Thyroid gland (tissue), 4 donors: ENCODE measurements at regions of chr17 and their contacts with region 1.

Region 1: DNA sequence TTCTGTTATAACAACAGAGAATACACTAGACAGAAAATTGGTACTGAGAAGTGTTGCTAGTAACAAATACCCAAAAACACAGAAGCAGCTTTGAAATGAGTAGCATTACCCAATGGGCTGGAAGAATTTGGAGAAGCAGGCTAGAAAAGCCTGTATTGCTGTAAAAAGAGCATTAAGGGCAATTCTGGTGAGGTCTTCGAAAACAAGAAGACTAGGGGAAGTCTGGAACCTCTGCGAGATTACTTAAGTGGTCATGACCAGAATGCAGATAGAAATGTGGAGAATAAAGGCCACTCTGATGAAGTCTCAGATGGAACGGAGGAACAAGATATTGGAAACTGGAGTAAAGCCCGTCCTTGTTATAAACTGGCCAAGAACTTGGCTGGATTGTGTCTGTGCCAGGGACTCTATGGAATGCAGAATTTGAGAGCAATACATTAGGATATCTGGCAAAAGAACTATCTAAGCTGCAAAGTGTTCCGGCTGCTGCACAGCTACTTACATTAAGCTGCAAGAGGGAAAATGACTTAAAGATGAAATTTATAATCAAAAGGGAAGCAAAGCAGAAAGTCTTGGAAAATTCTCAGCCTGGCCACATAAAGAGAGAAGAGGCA is 44.9 kb upstream of the PEMT start:
- DNase-seq: no peak
- H3K4me3 ChIP-seq: no peak overlapping the region
- H3K27ac ChIP-seq: no peak overlapping the region
- H3K4me1 ChIP-seq: peaks cover 0 to under 1% of the 10 kb centered on the region in 2 donors
- H3K27me3 ChIP-seq: no peaks in the 10 kb centered on the region
- CTCF ChIP-seq: no peak
- POLR2A ChIP-seq: no peak

Region 2: DNA sequence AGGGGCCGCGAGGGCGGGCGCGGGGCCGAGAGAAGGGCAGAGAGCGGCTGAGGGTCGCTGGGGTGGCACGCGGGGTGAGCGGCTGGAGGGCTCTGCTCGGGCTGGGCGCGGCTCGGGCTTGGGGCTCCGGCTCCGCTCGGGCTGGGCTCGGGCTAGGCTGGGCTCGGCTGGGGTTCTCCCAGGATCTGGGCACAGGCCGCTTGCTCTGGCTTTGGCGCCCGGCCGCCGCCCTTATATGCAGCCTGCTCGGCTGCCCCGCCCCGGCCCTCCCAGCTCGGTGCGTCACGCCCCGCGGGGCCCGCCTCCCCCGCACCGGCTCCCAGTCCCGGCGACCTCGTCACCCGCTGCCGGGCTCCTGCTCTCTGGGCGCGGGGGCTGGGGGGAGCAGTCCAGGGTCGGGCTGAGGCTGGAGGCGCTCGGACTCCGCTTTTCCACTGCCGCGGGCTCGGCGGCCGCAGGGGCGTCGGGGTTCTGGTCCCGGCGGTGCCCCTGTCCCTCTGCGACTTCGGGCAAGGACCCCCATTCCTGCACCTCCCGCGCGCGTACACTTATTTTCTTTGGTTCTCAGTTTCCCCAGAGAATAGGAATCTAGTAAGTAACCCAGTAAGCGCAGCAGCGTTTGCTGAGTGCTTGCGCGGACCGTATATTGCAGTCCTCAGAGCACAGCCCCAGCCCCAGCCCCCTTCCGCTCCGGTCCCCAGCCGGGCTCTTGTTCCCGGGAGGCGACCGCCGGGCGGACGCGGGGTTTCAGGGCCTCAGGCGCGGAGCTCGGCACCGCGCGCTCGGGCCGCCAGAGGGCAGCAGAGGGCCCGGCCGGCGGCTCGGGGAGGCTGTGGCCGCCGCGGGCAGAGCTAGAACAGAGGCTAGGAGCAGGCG is 140.0 kb before region 1 on chr17 and contains the start of gene RASD1:
- intact Hi-C with region 1: loop called (anchors 5 kb)
- DNase-seq: peak; percentile 91
- H3K4me3 ChIP-seq: peak within 1 kb of the TSS; percentile 9 to 80 (median 76)
- H3K27ac ChIP-seq: peak within 1 kb of the TSS; percentile 85 to 96 (median 94)
- H3K4me1 ChIP-seq: peaks cover 7 to 18% of the 10 kb centered on the region in 2 donors
- H3K27me3 ChIP-seq: no peaks in the 10 kb centered on the region
- CTCF ChIP-seq: peak; percentile 31 to 99 (median 94)
- POLR2A ChIP-seq: peak; percentile 99 to 100
- total RNA-seq, gene RASD1: 114 to 149 (median 141) TPM

Region 3: GRCh38 chr17:17739388-17740066 is 103.1 kb after region 1 on chr17:
- intact Hi-C with region 1: no loop called
- DNase-seq: peak in 1 of 2 donors; percentile 47
- H3K4me3 ChIP-seq: no peak overlapping the region
- H3K27ac ChIP-seq: peak overlapping the region in 2 of 3 donors; percentile 52 to 57
- H3K4me1 ChIP-seq: peaks cover 46 to 79% of the 10 kb centered on the region in 2 donors
- H3K27me3 ChIP-seq: no peaks in the 10 kb centered on the region
- CTCF ChIP-seq: no peak
- POLR2A ChIP-seq: no peak